ENCODE measurements at regions of chr12 and their contacts with region 1.

Region 1: DNA sequence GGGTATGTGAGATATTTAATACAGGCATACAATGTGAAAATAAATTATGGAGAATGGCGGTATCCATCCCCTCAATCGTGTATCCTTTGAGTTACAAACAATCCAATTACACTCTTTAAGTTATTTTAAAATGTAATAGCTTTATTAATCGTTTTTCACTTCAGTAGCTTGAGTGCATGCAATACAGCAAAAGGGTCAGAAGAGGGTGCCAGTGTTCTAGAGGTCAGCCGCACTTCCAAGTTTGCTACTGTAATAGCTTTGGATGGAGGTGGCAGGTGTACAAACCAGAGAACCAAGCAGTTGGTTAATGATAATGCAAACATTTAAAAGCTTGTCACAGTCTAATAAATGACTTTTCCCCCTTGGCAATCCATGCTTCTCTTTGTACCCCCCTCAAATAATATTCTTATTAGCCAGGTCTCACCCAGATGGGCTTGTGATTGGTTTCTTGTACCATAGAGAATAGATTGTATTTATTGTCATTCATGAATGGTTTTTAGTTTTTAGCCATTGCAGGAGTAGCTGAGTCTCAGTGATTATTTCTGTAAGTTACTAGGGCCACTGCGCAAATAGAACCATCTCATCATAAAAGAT is 127.0 kb downstream of the ERC1 start:
- DNase-seq: peak; percentile 43 to 78
- ATAC-seq: peak; percentile 84

Region 2: DNA sequence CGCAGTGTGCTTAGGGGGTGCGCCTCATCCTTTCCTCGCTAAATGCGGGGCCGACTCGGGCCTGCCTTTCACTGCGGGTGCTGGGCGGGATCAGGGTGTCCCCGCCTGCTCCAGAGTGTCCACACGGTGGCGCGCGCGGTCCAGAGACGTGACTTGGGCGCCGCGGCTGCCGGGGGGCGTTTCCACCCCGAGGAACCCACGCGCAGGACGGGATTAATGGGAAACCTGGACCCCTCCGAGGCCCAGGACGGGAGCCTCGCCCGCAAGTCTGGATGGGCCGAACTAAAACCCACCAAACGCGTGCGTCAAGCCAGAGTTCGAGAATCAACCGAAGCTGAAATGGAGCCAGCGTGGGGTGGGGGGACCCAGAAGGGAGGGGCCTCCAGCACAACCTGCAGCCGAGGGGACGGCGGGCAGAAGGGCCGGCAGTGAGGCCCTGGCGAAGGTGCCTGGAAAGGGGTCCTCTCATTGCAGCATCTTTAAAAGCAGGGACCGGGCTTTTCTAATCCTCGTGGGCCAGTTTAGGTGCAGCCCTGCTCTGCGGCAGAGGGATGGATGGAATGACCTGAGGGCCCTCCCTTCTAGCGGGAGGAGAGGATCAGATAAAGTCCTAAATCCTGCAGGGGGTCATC is 548.1 kb before region 1 on chr12:
- intact Hi-C with region 1: loop called in 1 of 2 experiments (anchors 5 kb)
- DNase-seq: peak; percentile 82 to 94
- ATAC-seq: peak; percentile 64

Region 3: GRCh38 chr12:1044696-1045095 is 73.4 kb before region 1 on chr12:
- intact Hi-C with region 1: no loop called
- DNase-seq: no peak
- ATAC-seq: no peak

Region 4: GRCh38 chr12:1583421-1584078 is 465.5 kb after region 1 on chr12:
- intact Hi-C with region 1: loop called (anchors 2 to 10 kb)
- DNase-seq: peak; percentile 74 to 80
- ATAC-seq: peak; percentile 84

Measured in left colon (tissue), 2 donors.